Activated CD8-positive, alpha-beta T cell treated with anti-CD3 and anti-CD28 coated beads for 36 hours (primary cell): ENCODE measurements at regions of chr1 and their contacts with region 1.

Region 1: GRCh38 chr1:228109073-228109961 is at the start of gene MRPL55:
- DNase-seq: peak; percentile 99
- ATAC-seq: peak; percentile 93
- H3K4me3 Mint-ChIP-seq: peak within 1 kb of the TSS; percentile 83
- H3K27ac Mint-ChIP-seq: peak within 1 kb of the TSS; percentile 90
- H3K4me1 Mint-ChIP-seq: peaks cover 31% of the 10 kb centered on the region
- H3K27me3 Mint-ChIP-seq: no peaks in the 10 kb centered on the region
- CTCF ChIP-seq: no peak
- total RNA-seq, gene MRPL55: 67.8 to 68.3 TPM

Region 2: DNA sequence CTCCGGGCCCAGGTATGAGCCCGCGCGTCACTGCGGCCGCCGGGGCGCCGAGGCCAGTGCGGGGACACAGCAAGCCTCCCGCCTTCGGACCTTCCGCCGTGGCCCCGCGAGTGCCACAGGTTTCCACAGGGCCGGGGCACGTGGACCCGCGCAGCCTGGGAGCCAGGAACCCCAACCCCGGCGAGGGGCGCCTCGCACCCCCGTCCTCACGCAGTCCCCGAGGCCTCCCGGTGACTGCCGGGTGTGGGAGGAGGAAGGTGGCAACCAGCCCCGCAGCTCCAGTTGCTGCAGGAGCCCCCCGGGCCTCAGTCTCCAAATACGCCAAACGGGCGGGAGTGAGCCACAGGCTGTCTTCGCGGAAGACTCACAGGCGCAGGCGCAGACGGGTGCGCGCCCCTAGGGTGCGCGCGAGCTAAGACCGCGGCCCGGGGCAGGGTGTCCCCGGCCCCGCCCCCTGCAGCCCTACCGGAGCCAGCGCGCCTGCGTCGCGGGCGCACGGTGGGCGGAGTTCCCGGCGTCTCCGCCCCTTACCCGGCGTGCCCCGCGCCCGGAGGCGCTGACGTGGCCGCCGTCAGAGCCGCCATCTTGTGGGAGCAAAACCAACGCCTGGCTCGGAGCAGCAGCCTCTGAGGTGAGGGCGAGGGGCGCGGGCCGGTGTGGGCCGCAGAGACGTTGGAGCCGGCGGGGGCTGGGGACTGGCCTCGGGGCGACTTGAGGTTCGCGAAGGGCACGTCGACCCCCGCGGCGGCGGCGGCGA is 27.0 kb before region 1 on chr1 and contains the start of gene ARF1:
- CTCF ChIA-PET with region 1: interaction called, 3 read pairs
- POLR2A ChIA-PET with region 1: interaction called, 21 read pairs
- intact Hi-C with region 1: no loop called
- DNase-seq: peak; percentile 91
- ATAC-seq: peak; percentile 94
- H3K4me3 Mint-ChIP-seq: peak within 1 kb of the TSS; percentile 97
- H3K27ac Mint-ChIP-seq: peak within 1 kb of the TSS; percentile 97
- H3K4me1 Mint-ChIP-seq: peaks cover 37% of the 10 kb centered on the region
- H3K27me3 Mint-ChIP-seq: no peaks in the 10 kb centered on the region
- CTCF ChIP-seq: no peak
- total RNA-seq, gene ARF1: 349 to 350 TPM